A673 (cell line): ENCODE measurements at regions of chr10 and their contacts with region 1.

Region 1: GRCh38 chr10:124992462-124993344 is 50.8 kb downstream of the ZRANB1 start:
- DNase-seq: peak; percentile 77
- H3K4me3 ChIP-seq: no peak overlapping the region
- H3K27ac ChIP-seq: no peak overlapping the region
- H3K4me1 ChIP-seq: no peaks in the 10 kb centered on the region
- H3K27me3 ChIP-seq: no peaks in the 10 kb centered on the region
- CTCF ChIP-seq: peak; percentile 66

Region 2: DNA sequence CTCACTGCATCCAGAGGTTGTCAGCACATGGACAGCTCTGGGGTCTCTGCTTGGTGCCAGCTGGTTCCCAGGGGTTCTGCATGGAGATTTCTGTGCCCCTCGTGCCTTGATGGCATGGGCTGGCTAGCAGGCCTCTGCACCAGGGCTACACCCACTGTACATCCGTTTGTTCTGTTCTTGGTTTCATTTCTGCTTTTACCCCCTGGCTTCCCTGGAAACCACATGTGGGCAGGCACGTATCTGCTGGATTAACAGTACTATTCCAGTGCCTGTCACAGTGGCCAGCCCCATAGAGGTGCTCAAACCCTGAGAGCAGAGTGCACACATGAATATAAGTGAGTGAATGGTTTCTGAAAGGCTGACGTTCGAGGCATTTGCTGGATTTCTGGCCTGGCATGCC is 1533.8 kb before region 1 on chr10:
- CTCF ChIA-PET with region 1: no interaction called
- POLR2A ChIA-PET with region 1: no interaction called
- intact Hi-C with region 1: no loop called
- DNase-seq: no peak
- H3K4me3 ChIP-seq: no peak overlapping the region
- H3K27ac ChIP-seq: no peak overlapping the region
- H3K4me1 ChIP-seq: no peaks in the 10 kb centered on the region
- H3K27me3 ChIP-seq: peaks cover 28% of the 10 kb centered on the region
- CTCF ChIP-seq: no peak

Region 3: GRCh38 chr10:124511205-124512039 is 481.3 kb before region 1 on chr10:
- CTCF ChIA-PET with region 1: interaction called, 10 read pairs
- POLR2A ChIA-PET with region 1: no interaction called
- intact Hi-C with region 1: no loop called
- DNase-seq: no peak
- H3K4me3 ChIP-seq: no peak overlapping the region
- H3K27ac ChIP-seq: no peak overlapping the region
- H3K4me1 ChIP-seq: no peaks in the 10 kb centered on the region
- H3K27me3 ChIP-seq: no peaks in the 10 kb centered on the region
- CTCF ChIP-seq: no peak

Region 4: GRCh38 chr10:125054216-125054615 is 61.5 kb after region 1 on chr10:
- CTCF ChIA-PET with region 1: interaction called, 17 read pairs
- POLR2A ChIA-PET with region 1: no interaction called
- intact Hi-C with region 1: no loop called
- DNase-seq: no peak
- H3K4me3 ChIP-seq: no peak overlapping the region
- H3K27ac ChIP-seq: peak overlapping the region; percentile 63
- H3K4me1 ChIP-seq: peaks cover 44% of the 10 kb centered on the region
- H3K27me3 ChIP-seq: no peaks in the 10 kb centered on the region
- CTCF ChIP-seq: no peak

Region 5: DNA sequence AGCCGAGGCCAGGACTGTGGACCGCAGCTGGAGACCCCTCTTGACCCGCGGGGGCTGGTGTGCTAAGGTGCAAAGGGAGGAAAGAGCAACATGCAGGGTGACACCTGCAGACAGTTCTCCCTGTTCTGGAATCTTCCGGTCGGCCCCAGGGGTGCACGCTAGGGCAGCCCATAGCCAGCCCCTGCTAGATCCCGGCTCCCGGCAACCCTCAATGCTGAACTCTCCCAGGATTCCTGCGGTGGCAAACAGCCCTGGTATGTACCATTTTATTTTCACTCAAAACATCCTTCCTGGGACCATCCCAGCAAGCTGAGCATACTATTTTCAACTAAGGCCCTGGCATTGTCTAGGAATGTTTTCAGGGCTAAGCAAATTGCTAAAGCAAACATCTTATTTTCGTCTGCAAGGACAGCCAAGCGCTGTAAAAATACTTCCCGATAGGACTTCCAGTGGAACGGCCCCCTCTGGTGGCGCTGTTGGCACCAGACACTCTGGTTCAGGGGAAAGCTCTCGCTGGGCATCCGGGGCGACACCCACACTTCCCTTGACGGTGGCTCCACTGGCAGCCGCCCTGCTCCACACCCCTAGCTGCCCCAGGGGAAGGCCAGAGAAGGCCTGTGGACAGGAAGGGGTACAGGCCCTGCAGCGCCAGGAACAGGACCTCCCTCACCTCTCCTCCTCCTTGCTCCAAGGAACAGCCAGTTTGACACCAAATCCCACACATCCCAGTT is 68.3 kb after region 1 on chr10:
- CTCF ChIA-PET with region 1: interaction called, 9 read pairs
- POLR2A ChIA-PET with region 1: no interaction called
- intact Hi-C with region 1: loop called (anchors 5 kb)
- DNase-seq: peak; percentile 84
- H3K4me3 ChIP-seq: no peak overlapping the region
- H3K27ac ChIP-seq: peak overlapping the region; percentile 48
- H3K4me1 ChIP-seq: peaks cover 63% of the 10 kb centered on the region
- H3K27me3 ChIP-seq: no peaks in the 10 kb centered on the region
- CTCF ChIP-seq: peak; percentile 91

Region 6: DNA sequence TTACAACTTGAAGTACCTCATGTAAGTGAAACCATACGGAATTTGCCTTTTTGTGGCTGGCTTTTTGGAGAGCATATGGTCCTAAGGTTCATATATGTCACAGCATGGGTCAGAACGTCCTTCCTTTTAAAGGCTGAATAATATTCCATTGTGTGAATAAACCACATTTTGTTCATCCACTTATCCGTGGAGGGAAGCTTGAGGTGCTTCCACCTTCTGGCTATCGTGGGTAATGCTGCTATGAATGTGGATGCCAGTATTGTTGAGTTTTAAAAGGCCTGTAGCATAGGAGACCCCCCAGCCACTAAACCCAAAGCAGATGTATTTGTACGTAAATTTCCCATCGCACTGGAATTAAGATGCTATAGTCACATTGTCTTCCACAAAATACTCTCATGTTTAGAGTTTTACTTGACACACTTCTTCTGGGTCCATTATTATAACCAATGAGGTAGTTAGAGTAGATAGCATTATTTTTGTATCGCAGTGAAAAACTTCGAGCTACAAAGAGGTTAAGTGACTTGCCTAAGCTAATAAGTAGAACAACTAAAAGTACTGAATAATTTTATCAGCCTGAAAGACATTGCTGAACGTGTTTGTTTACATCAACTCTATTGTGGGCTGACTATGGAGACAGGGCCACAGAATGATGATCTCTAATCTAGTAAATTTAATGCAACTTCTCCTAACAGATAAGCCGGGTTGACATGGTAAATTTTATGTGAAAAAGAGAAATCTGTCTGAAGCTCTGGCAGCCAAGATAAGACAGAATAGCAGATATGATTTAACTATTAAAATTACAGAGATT is 350.6 kb after region 1 on chr10:
- CTCF ChIA-PET with region 1: no interaction called
- POLR2A ChIA-PET with region 1: no interaction called
- intact Hi-C with region 1: loop called (anchors 5 kb)
- DNase-seq: peak; percentile 31
- H3K4me3 ChIP-seq: no peak overlapping the region
- H3K27ac ChIP-seq: no peak overlapping the region
- H3K4me1 ChIP-seq: no peaks in the 10 kb centered on the region
- H3K27me3 ChIP-seq: no peaks in the 10 kb centered on the region
- CTCF ChIP-seq: peak; percentile 67

Region 7: GRCh38 chr10:125684581-125684980 is 691.9 kb after region 1 on chr10:
- CTCF ChIA-PET with region 1: interaction called, 12 read pairs
- POLR2A ChIA-PET with region 1: no interaction called
- intact Hi-C with region 1: no loop called
- DNase-seq: no peak
- H3K4me3 ChIP-seq: no peak overlapping the region
- H3K27ac ChIP-seq: no peak overlapping the region
- H3K4me1 ChIP-seq: no peaks in the 10 kb centered on the region
- H3K27me3 ChIP-seq: no peaks in the 10 kb centered on the region
- CTCF ChIP-seq: no peak